ENCODE measurements at regions of chr4 and their contacts with region 1.

Region 1: DNA sequence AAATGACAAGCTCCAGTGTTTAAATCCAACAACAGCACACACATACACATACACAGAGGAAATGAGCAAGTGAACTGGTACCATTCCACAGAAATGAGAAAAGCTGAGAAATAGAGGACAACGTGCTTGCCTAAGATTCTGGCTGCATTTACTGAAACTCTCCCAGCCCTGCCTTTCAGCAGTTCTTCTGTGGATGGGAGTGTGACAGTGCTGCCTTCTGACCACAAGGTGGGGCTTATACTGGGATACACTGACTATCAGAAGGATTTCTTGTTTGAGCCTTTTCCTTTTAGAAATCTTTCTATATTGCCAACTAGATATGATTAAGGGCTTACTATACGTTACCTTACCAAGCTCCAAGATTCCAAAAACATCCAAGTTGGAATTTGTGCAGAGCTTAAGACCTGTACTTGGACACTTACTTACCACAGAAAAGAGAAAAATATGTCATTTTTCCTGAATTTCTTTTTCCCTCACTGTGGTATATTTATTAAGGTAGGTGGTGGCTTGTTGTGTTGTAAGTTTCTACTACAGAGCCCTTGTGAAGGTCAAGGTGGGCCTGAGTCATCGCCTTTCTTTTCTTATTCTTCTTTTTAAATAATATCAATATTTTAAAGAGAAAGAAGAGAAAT is 10.7 kb upstream of the CXCL8 start:
- DNase-seq: peak; percentile 68
- ATAC-seq: peak; percentile 95

Region 2: DNA sequence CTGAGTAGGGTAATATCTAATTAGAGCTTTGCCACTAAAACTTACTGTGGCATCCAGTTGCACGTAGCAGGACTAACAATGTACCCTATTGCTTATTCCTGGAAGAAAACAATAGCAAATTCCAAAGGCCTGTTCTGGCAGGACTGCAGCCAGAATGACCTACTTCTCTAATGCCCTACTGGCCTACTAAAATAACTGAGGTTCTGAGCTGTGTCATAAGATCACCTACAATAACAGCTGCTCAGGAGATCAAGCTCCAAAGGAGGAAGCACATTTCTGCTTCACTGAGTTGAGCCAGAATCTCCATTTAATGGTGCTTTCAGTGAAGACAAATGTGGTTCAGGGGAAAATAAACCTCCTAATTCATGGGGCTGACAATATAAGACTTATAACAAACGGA is 31.4 kb before region 1 on chr4:
- intact Hi-C with region 1: no loop called
- DNase-seq: no peak
- ATAC-seq: peak; percentile 54

Region 3: GRCh38 chr4:73765296-73765695 is 35.6 kb after region 1 on chr4:
- intact Hi-C with region 1: loop called (anchors 5 kb)
- DNase-seq: no peak
- ATAC-seq: no peak

Region 4: DNA sequence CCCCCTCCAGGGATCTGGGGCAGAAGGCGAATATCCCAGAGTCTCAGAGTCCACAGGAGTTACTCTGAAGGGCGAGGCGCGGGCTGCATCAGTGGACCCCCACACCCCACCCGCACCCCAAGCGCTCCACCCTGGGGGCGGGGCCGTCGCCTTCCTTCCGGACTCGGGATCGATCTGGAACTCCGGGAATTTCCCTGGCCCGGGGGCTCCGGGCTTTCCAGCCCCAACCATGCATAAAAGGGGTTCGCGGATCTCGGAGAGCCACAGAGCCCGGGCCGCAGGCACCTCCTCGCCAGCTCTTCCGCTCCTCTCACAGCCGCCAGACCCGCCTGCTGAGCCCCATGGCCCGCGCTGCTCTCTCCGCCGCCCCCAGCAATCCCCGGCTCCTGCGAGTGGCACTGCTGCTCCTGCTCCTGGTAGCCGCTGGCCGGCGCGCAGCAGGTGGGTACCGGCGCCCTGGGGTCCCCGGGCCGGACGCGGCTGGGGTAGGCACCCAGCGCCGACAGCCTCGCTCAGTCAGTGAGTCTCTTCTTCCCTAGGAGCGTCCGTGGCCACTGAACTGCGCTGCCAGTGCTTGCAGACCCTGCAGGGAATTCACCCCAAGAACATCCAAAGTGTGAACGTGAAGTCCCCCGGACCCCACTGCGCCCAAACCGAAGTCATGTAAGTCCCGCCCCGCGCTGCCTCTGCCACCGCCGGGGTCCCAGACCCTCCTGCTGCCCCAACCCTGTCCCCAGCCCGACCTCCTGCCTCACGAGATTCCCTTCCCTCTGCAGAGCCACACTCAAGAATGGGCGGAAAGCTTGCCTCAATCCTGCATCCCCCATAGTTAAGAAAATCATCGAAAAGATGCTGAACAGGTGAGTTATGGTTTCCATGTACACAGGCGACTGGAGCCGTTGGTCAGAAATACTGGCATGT is 139.7 kb after region 1 on chr4 and contains the start of gene CXCL1:
- intact Hi-C with region 1: loop called (anchors 10 kb)
- DNase-seq: peak; percentile 78
- ATAC-seq: peak; percentile 77
- total RNA-seq, gene CXCL1: 1.3 TPM

Region 5: DNA sequence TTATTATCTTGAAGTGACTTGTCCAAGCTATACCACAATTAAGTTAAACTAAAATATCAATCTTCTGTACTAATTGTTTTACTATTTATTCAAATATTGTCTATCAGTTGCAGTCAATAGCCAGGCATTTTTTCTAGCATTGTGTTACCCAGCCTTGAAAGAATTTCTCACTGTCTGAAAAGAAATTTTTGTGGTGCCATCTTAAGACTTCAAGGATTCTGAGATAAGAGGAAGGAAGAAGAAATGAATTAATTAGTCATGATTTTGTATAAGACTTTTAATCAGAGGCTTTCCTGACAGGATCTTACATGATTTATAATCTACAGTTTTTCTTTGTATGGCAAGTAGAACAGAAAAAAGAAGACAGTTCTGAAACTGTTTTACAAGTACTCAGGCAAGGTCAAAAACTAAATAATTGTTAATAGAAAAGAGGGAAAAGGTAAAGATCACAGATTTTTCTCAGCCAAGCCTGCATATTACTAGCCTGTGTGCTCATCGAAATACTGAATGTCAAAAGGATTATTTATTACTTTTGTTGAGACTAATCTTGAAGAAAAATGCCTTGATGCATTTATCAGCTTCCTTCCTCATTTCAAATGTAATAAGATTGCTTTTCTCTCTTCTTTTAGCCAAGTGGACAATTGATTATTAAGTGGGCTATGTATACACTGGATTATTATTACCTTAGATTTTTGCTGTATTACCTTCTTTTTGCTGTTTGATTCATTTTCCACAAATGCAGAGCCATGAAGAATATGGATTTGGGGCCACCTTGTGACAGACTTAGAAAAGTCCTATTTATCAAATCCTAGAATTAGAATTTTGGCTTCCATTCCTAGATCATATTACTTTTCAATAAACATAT is 193.3 kb after region 1 on chr4:
- intact Hi-C with region 1: loop called (anchors 5 kb)
- DNase-seq: no peak
- ATAC-seq: no peak

Region 6: GRCh38 chr4:74038161-74039064 is 308.8 kb after region 1 on chr4 and contains the start of gene CXCL3:
- intact Hi-C with region 1: loop called (anchors 5 kb)
- DNase-seq: peak; percentile 91
- ATAC-seq: peak; percentile 88
- total RNA-seq, gene CXCL3: 0.16 TPM